PC-9 (cell line): ENCODE measurements at regions of chr16 and their contacts with region 1.

Region 1: DNA sequence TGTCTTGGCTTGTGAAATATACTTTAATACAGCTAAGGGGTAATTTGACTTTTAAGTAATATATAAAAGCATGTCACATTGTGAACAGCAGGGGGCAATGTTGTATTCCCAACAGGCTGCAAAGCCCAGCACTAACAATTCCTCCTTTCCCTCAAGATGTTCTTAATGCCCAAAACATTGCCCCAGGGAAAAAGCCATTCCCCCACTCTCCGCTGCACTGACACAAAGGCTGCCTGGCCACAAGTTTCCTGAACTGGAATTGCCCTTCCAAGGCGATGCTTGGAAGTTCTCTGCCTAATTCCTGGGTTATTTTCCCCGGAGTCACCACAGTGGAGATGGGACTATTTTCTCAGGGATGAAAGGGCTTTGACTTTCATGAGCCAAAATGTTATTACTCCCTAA is 27.2 kb downstream of the CLEC16A start:
- DNase-seq: peak; percentile 80 to 82
- H3K4me3 ChIP-seq: no peak overlapping the region
- H3K27ac ChIP-seq: no peak overlapping the region
- H3K4me1 ChIP-seq: peaks cover 9% of the 10 kb centered on the region
- H3K27me3 ChIP-seq: no peaks in the 10 kb centered on the region
- CTCF ChIP-seq: peak; percentile 89

Region 2: GRCh38 chr16:10947211-10947787 is 24.3 kb before region 1 on chr16:
- CTCF ChIA-PET with region 1: no interaction called
- POLR2A ChIA-PET with region 1: no interaction called
- intact Hi-C with region 1: no loop called
- DNase-seq: no peak
- H3K4me3 ChIP-seq: no peak overlapping the region
- H3K27ac ChIP-seq: no peak overlapping the region
- H3K4me1 ChIP-seq: peaks cover 54% of the 10 kb centered on the region
- H3K27me3 ChIP-seq: no peaks in the 10 kb centered on the region
- CTCF ChIP-seq: no peak

Region 3: GRCh38 chr16:11201498-11202259 is 230.1 kb after region 1 on chr16:
- CTCF ChIA-PET with region 1: interaction called, 11 read pairs
- POLR2A ChIA-PET with region 1: no interaction called
- intact Hi-C with region 1: no loop called
- DNase-seq: peak; percentile 89 to 94
- H3K4me3 ChIP-seq: peak overlapping the region; percentile 28; the same call in 1 of the 2 replicates
- H3K27ac ChIP-seq: peak overlapping the region; percentile 75
- H3K4me1 ChIP-seq: peaks cover 37% of the 10 kb centered on the region
- H3K27me3 ChIP-seq: no peaks in the 10 kb centered on the region
- CTCF ChIP-seq: no peak

Region 4: DNA sequence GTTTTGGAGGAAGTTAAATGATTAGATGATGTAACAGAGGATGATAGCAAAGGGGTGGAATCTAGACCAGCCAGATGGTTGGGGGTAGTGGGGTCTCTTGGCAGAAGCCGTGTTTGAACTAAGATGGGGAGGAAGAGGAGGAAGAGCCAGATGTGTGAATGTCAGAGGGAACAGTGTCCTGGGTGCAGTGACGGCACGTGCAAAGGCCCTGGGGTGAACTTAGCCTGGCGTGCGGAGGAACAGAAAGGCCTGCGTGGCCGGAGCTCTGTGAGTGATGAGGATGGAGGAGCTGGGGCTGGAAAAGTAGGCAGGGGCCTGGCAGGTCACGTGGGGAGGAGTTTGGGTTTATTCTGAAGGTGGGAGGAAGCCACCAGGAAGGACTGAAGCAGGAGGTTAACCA is 347.3 kb after region 1 on chr16:
- CTCF ChIA-PET with region 1: interaction called, 14 read pairs
- POLR2A ChIA-PET with region 1: no interaction called
- intact Hi-C with region 1: no loop called
- DNase-seq: no peak
- H3K4me3 ChIP-seq: no peak overlapping the region
- H3K27ac ChIP-seq: no peak overlapping the region
- H3K4me1 ChIP-seq: peaks cover 17% of the 10 kb centered on the region
- H3K27me3 ChIP-seq: no peaks in the 10 kb centered on the region
- CTCF ChIP-seq: no peak

Region 5: GRCh38 chr16:11396241-11397048 is 424.9 kb after region 1 on chr16:
- CTCF ChIA-PET with region 1: interaction called, 3 read pairs
- POLR2A ChIA-PET with region 1: interaction called, 3 read pairs
- intact Hi-C with region 1: loop called (anchors 2 kb)
- DNase-seq: peak in 1 of 2 experiments; percentile 82
- H3K4me3 ChIP-seq: no peak overlapping the region
- H3K27ac ChIP-seq: no peak overlapping the region
- H3K4me1 ChIP-seq: 0 out of 2 replicates have a peak, but pooled peaks cover under 1% of the 10 kb centered on the region
- H3K27me3 ChIP-seq: no peaks in the 10 kb centered on the region
- CTCF ChIP-seq: peak; percentile 99

Region 6: DNA sequence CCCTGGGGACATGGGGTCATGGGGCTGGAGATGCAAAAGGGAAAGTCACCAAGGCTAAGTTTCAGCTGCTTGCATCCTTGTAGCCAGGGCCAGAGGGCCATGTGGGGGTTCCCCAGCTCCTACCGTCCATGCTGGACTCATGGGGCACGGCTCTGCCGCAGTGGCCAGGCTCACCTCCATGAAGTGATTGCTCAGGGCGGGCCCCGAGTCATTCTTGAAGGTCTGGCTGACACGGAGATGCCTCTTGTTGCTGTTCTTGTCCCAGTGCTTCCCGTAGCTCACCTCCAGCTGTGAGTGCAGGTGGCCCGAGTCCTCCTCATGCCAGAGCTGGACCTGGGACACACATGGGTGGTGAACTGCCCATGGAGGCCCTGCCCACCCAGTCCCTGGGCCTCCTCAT is 488.2 kb after region 1 on chr16:
- CTCF ChIA-PET with region 1: no interaction called
- POLR2A ChIA-PET with region 1: no interaction called
- intact Hi-C with region 1: no loop called
- DNase-seq: no peak
- H3K4me3 ChIP-seq: no peak overlapping the region
- H3K27ac ChIP-seq: no peak overlapping the region
- H3K4me1 ChIP-seq: no peaks in the 10 kb centered on the region
- H3K27me3 ChIP-seq: no peaks in the 10 kb centered on the region
- CTCF ChIP-seq: no peak

Region 7: GRCh38 chr16:11715246-11715947 is 743.8 kb after region 1 on chr16:
- CTCF ChIA-PET with region 1: no interaction called
- POLR2A ChIA-PET with region 1: no interaction called
- intact Hi-C with region 1: loop called (anchors 2 kb)
- DNase-seq: no peak
- H3K4me3 ChIP-seq: no peak overlapping the region
- H3K27ac ChIP-seq: no peak overlapping the region
- H3K4me1 ChIP-seq: no peaks in the 10 kb centered on the region
- H3K27me3 ChIP-seq: no peaks in the 10 kb centered on the region
- CTCF ChIP-seq: no peak

Region 8: DNA sequence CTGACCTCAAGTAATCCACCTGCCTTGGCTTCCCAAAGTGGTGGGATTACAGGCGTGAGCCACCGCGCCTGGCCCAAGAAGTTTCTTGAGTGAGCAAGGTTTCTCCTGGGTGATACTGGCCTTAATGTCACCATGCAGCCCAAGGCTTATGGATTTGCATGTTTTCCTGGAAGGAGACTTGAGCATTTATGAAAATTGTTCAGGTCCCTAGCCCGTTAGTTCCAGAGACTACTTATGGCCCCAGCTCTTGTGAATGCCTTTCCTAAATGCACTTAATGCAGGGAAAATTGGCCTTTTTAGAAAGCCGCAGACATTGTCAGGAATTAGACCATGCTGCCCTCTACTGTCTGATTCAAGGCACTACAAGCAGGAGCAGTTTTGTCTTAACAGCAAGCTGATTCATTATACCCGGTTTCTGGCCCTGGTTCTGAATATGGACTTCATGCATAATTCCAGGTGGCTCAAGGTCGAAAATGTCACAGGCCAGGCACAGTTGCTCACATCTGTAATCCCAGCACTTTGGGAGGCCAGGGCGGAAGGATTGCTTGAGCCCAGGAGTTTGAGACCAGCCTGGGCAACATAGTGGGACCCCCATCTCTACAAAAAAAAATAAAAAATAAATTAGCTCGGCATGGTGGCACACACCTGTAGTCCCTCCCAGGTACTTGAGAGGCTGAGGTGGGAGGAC is 1096.3 kb after region 1 on chr16:
- CTCF ChIA-PET with region 1: no interaction called
- POLR2A ChIA-PET with region 1: no interaction called
- intact Hi-C with region 1: loop called (anchors 5 kb)
- DNase-seq: peak; percentile 55 to 59
- H3K4me3 ChIP-seq: no peak overlapping the region
- H3K27ac ChIP-seq: no peak overlapping the region
- H3K4me1 ChIP-seq: no peaks in the 10 kb centered on the region
- H3K27me3 ChIP-seq: no peaks in the 10 kb centered on the region
- CTCF ChIP-seq: peak; percentile 95